Caco-2 (cell line): ENCODE measurements at regions of chr3 and their contacts with region 1.

Region 1: DNA sequence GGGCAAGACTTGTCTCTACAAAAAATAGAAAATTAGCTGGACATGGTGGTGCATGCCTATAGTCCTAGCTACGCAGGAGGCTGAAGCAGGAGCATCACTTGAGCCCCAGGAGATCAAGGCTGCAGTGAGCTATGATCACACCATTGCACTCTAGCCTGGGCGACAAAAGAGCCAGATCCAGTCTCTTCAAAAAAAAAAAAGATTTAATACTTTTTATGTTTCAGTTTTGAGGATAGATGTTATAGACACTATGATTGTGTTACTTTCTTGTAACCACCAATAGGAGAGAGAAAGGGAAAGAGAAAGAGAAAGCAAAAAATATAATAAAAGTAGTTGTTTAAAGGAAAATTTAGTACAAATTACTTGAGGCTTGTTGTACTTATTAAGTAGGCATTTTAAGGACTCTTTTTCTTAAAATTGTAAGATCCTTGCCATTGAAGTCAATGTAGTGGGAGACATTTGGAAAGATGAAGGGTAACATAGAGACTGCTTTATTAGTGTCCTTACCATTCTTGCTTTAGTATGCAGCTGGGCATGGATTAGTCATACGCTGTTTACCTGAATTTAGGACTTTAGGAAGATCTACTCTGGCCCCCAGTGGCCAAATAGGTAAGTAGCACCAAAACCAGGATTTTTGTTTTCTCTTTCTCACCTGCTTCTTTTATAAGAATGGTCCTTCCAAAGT is 35.1 kb upstream of the ZDHHC23 start:
- DNase-seq: peak; percentile 46 to 62
- H3K4me3 ChIP-seq: no peak overlapping the region
- H3K4me3 Mint-ChIP-seq: no peak overlapping the region
- H3K27ac Mint-ChIP-seq: no peak overlapping the region
- H3K4me1 ChIP-seq: no peaks in the 10 kb centered on the region
- H3K4me1 Mint-ChIP-seq: no peaks in the 10 kb centered on the region
- H3K27me3 ChIP-seq: no peaks in the 10 kb centered on the region
- H3K27me3 Mint-ChIP-seq: peaks cover 3% of the 10 kb centered on the region
- CTCF ChIP-seq: peak; percentile 56 to 80

Region 2: DNA sequence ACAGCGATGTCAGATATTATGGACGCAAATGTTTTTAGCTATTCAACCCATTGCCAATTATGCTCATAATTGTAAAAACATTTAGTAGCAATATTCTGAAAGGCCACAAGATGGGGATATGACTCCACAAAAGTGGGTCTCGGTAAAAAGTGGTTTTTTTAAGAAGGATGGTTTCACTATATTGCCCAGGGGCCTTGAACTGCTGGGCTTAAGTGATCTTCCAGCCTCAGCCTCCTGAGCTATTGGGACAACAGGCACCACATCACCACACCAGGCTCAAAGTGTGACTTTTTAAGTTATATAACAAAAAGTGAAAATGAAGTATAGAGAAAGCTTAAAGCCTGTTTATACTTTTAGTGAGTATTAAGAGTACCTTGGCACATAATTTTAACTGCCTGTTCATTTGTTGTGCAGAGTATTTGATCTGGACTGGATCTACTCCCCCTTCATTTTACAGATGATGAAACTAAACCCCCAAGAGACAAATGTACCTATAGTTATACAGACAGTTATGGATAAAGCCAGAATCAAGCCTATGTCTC is 176.1 kb before region 1 on chr3:
- CTCF ChIA-PET with region 1: interaction called, 3 read pairs
- POLR2A ChIA-PET with region 1: no interaction called
- intact Hi-C with region 1: loop called (anchors 1 kb)
- DNase-seq: peak in 1 of 2 experiments; percentile 60
- H3K4me3 ChIP-seq: no peak overlapping the region
- H3K4me3 Mint-ChIP-seq: no peak overlapping the region
- H3K27ac Mint-ChIP-seq: no peak overlapping the region
- H3K4me1 ChIP-seq: peaks cover 6% of the 10 kb centered on the region; the same call in 1 of the 2 replicates
- H3K4me1 Mint-ChIP-seq: peaks cover 7% of the 10 kb centered on the region
- H3K27me3 ChIP-seq: no peaks in the 10 kb centered on the region
- H3K27me3 Mint-ChIP-seq: no peaks in the 10 kb centered on the region
- CTCF ChIP-seq: peak; percentile 45 to 52

Region 3: GRCh38 chr3:113838631-113839209 is 74.0 kb before region 1 on chr3 and contains the start of gene GRAMD1C:
- CTCF ChIA-PET with region 1: interaction called, 24 read pairs
- POLR2A ChIA-PET with region 1: no interaction called
- intact Hi-C with region 1: loop called (anchors 1 kb)
- DNase-seq: peak; percentile 86 to 88
- H3K4me3 ChIP-seq: peak within 1 kb of the TSS; percentile 35
- H3K4me3 Mint-ChIP-seq: peak within 1 kb of the TSS; percentile 71
- H3K27ac Mint-ChIP-seq: peak within 1 kb of the TSS; percentile 48
- H3K4me1 ChIP-seq: 0 out of 2 replicates have a peak, but pooled peaks cover 9% of the 10 kb centered on the region
- H3K4me1 Mint-ChIP-seq: peaks cover 7% of the 10 kb centered on the region
- H3K27me3 ChIP-seq: no peaks in the 10 kb centered on the region
- H3K27me3 Mint-ChIP-seq: no peaks in the 10 kb centered on the region
- CTCF ChIP-seq: peak; percentile 86 to 92
- total RNA-seq, gene GRAMD1C: 3.9 and 4.2 TPM in 2 replicates

Region 4: GRCh38 chr3:113844622-113845222 is 68.0 kb before region 1 on chr3:
- CTCF ChIA-PET with region 1: interaction called, 24 read pairs
- POLR2A ChIA-PET with region 1: no interaction called
- intact Hi-C with region 1: loop called (anchors 1 kb)
- DNase-seq: peak in 1 of 2 experiments; percentile 21
- H3K4me3 ChIP-seq: no peak overlapping the region
- H3K4me3 Mint-ChIP-seq: no peak overlapping the region
- H3K27ac Mint-ChIP-seq: no peak overlapping the region
- H3K4me1 ChIP-seq: peaks cover 8% of the 10 kb centered on the region
- H3K4me1 Mint-ChIP-seq: peaks cover 7% of the 10 kb centered on the region
- H3K27me3 ChIP-seq: no peaks in the 10 kb centered on the region
- H3K27me3 Mint-ChIP-seq: no peaks in the 10 kb centered on the region
- CTCF ChIP-seq: peak; percentile 57 to 58

Region 5: GRCh38 chr3:113867506-113867905 is 45.2 kb before region 1 on chr3:
- CTCF ChIA-PET with region 1: no interaction called
- POLR2A ChIA-PET with region 1: no interaction called
- intact Hi-C with region 1: no loop called
- DNase-seq: no peak
- H3K4me3 ChIP-seq: no peak overlapping the region
- H3K4me3 Mint-ChIP-seq: no peak overlapping the region
- H3K27ac Mint-ChIP-seq: no peak overlapping the region
- H3K4me1 ChIP-seq: no peaks in the 10 kb centered on the region
- H3K4me1 Mint-ChIP-seq: no peaks in the 10 kb centered on the region
- H3K27me3 ChIP-seq: no peaks in the 10 kb centered on the region
- H3K27me3 Mint-ChIP-seq: peaks cover 7% of the 10 kb centered on the region
- CTCF ChIP-seq: no peak

Region 6: GRCh38 chr3:113947372-113948014 is 34.8 kb after region 1 on chr3 and contains the start of gene ZDHHC23:
- CTCF ChIA-PET with region 1: no interaction called
- POLR2A ChIA-PET with region 1: no interaction called
- intact Hi-C with region 1: no loop called
- DNase-seq: peak; percentile 80 to 87
- H3K4me3 ChIP-seq: peak within 1 kb of the TSS; percentile 90
- H3K4me3 Mint-ChIP-seq: peak within 1 kb of the TSS; percentile 80
- H3K27ac Mint-ChIP-seq: no peak within 1 kb of the TSS
- H3K4me1 ChIP-seq: no peaks in the 10 kb centered on the region
- H3K4me1 Mint-ChIP-seq: peaks cover 7% of the 10 kb centered on the region
- H3K27me3 ChIP-seq: no peaks in the 10 kb centered on the region
- H3K27me3 Mint-ChIP-seq: peaks cover 15% of the 10 kb centered on the region
- CTCF ChIP-seq: no peak
- total RNA-seq, gene ZDHHC23: 9.0 and 9.1 TPM in 2 replicates

Region 7: DNA sequence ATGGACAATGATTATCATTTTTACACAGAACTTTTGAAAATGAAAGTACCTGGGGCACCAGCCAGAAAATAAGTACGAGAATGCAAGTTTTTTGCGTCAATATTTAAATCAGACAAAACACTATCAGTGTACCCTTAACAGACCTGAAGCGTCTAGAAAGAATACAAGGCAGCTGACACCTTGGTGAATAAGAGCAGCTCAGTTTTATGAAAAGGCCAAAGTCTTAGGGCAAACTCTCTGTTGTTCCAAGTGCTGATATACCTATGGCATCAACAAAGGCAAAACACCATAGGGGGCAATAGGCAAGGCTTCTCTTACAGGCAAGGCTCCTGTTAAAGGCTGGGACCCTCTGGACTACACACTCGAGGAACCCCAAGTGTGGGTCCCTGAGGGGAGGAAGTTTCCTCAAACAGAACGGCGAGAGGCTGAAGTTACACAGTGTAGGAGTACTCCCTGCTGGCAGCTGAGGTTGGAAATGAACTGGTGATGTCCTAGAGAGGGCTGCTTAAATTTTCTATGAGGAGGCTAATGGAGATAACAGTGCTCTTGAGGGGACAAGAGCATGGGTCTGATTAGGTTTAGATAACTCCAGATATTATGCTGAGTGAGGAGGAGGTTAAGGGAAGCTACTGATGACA is 672.2 kb after region 1 on chr3:
- CTCF ChIA-PET with region 1: no interaction called
- POLR2A ChIA-PET with region 1: no interaction called
- intact Hi-C with region 1: no loop called
- DNase-seq: no peak
- H3K4me3 ChIP-seq: no peak overlapping the region
- H3K4me3 Mint-ChIP-seq: no peak overlapping the region
- H3K27ac Mint-ChIP-seq: no peak overlapping the region
- H3K4me1 ChIP-seq: no peaks in the 10 kb centered on the region
- H3K4me1 Mint-ChIP-seq: no peaks in the 10 kb centered on the region
- H3K27me3 ChIP-seq: no peaks in the 10 kb centered on the region
- H3K27me3 Mint-ChIP-seq: no peaks in the 10 kb centered on the region
- CTCF ChIP-seq: no peak